AG04450 (cell line): ENCODE measurements at regions of chr12 and their contacts with region 1.

Region 1: DNA sequence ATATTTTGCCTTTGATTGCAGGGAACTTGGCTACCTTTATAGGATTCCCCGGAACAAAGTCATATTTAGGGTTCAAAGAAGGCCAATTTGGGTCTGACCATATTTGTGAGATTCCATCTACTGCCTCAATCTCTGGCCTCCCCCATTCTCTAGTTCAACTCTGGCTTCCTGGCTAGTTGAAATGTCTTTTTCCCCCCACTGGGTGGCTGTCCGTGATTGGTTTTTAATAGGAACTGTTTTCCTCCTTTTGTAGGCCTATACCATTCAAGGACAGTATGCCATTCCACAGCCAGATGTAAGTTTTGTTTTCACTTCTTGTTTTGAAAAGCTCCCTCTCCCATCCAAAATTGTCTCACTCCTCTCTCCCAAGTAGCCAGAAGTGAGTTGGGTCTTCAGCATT is 13.8 kb downstream of the PCBP2 start:
- DNase-seq: no peak
- H3K4me3 ChIP-seq: no peak overlapping the region
- H3K27ac ChIP-seq: no peak overlapping the region
- H3K27me3 ChIP-seq: no peaks in the 10 kb centered on the region
- CTCF ChIP-seq: 0 out of 2 replicates have a peak, but pooled peaks have one; percentile 4

Region 2: DNA sequence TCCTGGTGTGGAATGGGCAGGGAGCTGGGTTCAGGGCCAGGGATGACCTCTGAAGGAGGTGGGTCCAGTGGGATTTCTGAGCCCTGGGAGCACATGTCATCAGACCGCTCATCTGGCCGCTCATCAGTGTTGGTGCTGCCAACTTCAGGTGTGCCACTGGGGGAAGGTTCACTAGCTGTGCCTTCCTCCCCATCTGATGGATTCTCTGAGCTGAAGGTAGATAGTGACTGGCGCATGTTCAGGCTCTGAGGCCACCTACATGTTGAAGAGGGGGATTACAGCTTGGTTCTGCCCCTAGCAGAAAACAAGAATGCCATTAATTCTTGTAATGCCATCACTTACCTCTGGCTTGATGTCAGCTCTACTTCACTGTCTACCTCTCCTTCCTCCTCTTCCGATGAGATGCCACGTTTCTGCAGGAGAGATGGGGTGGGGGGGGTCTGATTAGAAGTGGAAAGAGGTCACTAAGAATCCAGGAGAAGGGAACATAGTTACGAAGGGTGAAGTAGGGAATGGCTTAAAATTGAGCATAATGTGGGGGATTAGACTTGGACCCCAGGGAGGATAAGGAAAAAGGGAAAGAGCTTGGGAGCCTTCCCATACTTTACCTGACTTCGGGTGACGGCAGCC is 16.4 kb after region 1 on chr12:
- CTCF ChIA-PET with region 1: no interaction called
- POLR2A ChIA-PET with region 1: interaction called, 18 read pairs
- DNase-seq: no peak
- H3K4me3 ChIP-seq: no peak overlapping the region
- H3K27ac ChIP-seq: peak overlapping the region; percentile 52
- H3K27me3 ChIP-seq: no peaks in the 10 kb centered on the region
- CTCF ChIP-seq: peak; percentile 31

Region 3: GRCh38 chr12:53508534-53509199 is 43.0 kb after region 1 on chr12:
- CTCF ChIA-PET with region 1: interaction called, 6 read pairs
- POLR2A ChIA-PET with region 1: interaction called, 19 read pairs
- DNase-seq: peak; percentile 46
- H3K4me3 ChIP-seq: no peak overlapping the region
- H3K27ac ChIP-seq: no peak overlapping the region
- H3K27me3 ChIP-seq: no peaks in the 10 kb centered on the region
- CTCF ChIP-seq: peak; percentile 93

Region 4: DNA sequence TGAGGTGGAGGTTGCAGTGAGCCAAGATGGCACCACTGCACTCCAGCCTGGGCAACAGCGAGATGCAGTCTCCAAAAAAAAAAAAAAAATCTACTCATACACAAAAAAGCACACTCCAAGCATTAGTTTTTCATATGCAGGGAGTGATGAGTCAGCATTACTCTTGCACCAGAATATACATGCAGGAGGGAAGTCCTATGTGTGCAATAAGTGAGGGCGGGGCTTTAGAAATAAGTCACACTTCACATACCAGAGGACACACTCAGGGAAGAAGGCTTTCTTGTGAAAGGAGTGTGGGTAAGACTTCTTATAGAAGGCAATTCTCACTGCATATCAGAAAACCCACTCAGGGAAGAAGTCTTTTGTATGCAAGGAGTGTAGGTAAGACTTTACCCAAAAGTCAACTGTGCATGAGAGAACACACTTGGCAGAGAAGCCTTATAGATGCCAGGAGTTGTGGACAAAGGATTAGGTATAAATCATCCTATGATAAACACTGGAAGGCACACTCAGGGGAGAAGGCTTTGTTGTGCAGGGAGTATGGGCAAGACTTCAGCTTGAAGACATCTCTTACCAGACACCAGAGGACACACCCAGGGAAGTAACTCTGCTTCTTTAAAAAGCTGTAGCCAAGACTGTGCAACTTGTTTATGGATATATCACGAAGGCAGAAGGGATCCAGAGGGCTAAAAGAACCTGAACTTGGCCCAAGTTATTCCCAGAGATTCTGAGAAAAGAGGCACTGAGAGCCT is 110.0 kb after region 1 on chr12:
- CTCF ChIA-PET with region 1: no interaction called
- POLR2A ChIA-PET with region 1: no interaction called
- DNase-seq: peak; percentile 32
- H3K4me3 ChIP-seq: no peak overlapping the region
- H3K27ac ChIP-seq: peak overlapping the region; percentile 47
- H3K27me3 ChIP-seq: no peaks in the 10 kb centered on the region
- CTCF ChIP-seq: no peak